ENCODE measurements at regions of chr6 and their contacts with region 1.

Region 1: GRCh38 chr6:127457456-127458064 is 1.6 kb downstream of the KIAA0408 start:
- DNase-seq: no peak
- H3K4me3 Mint-ChIP-seq: no peak overlapping the region
- H3K27ac Mint-ChIP-seq: no peak overlapping the region
- H3K4me1 Mint-ChIP-seq: peaks cover 61% of the 10 kb centered on the region
- H3K27me3 Mint-ChIP-seq: peaks cover 1% of the 10 kb centered on the region

Region 2: GRCh38 chr6:127484212-127484858 is 26.8 kb after region 1 on chr6:
- intact Hi-C with region 1: loop called (anchors 1 kb)
- DNase-seq: no peak
- H3K4me3 Mint-ChIP-seq: peak overlapping the region; percentile 66
- H3K27ac Mint-ChIP-seq: peak overlapping the region; percentile 65
- H3K4me1 Mint-ChIP-seq: peaks cover 42% of the 10 kb centered on the region
- H3K27me3 Mint-ChIP-seq: no peaks in the 10 kb centered on the region

Measured in activated T-helper 2 cell treated with anti-CD3 and anti-CD28 coated beads, Interferon-gamma antibody, Interleukin-2, Interleukin-4, amounts not matched to agents 10 μg/mL and 5 μg/mL and 100 μg/mL, durations not matched to agents 14 hours and 24 hours and 36 hours (primary cell).